GM12878 (cell line): ENCODE measurements at regions of chr5 and their contacts with region 1.

Region 1: GRCh38 chr5:72307968-72308852 is 11.8 kb downstream of the MRPS27 start:
- DNase-seq: peak; percentile 94
- ATAC-seq: peak; percentile 95
- H3K4me3 ChIP-seq: peak overlapping the region; percentile 79
- H3K27ac ChIP-seq: peak overlapping the region; percentile 97
- H3K4me1 ChIP-seq: peaks cover 22% of the 10 kb centered on the region
- H3K27me3 ChIP-seq: no peaks in the 10 kb centered on the region
- CTCF ChIP-seq: peak; percentile 83 to 97 (median 84)
- EP300 ChIP-seq: no peak
- POLR2A ChIP-seq: peak; percentile 100
- RAD21 ChIP-seq: peak; percentile 79

Region 2: GRCh38 chr5:71782771-71783770 is 525.1 kb before region 1 on chr5:
- CTCF ChIA-PET with region 1: interaction called, 35 read pairs
- POLR2A ChIA-PET with region 1: no interaction called
- RAD21 ChIA-PET with region 1: interaction called, 15 read pairs
- SMC1A ChIA-PET with region 1: interaction called, 15 read pairs
- in situ Hi-C with region 1: loop called (anchors 5 kb)
- intact Hi-C with region 1: loop called (anchors 1 kb)
- DNase-seq: peak; percentile 60
- ATAC-seq: peak; percentile 95
- H3K4me3 ChIP-seq: peak overlapping the region; percentile 1; the same call in 1 of the 2 replicates
- H3K27ac ChIP-seq: no peak overlapping the region; the same call in 1 of the 2 replicates
- H3K4me1 ChIP-seq: peaks cover 15% of the 10 kb centered on the region
- H3K27me3 ChIP-seq: no peaks in the 10 kb centered on the region; a peak in 1 of 4 replicates
- CTCF ChIP-seq: peak; percentile 61 to 71 (median 70)
- EP300 ChIP-seq: no peak; a peak in 1 of 4 replicates
- POLR2A ChIP-seq: no peak
- RAD21 ChIP-seq: peak; percentile 72

Region 3: DNA sequence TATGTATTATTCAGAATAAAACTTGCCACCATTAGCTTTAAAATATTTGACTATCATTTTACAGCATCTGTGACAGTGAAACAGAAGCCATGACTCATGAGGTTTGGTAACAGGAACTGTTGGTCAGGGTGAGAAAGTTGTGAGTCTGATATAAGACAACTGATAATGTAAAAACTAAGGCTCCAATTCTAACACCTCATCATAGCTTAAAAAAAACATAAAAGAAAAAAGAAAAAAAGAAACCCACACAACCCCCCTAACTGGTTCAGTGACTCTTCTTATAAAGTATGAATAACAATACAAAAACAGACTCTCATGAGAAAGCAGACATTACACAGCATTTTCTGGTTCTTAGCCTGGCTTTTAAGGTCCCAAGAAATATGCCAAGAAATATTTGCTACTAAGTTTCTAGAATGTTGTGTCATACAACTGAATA is 73.9 kb before region 1 on chr5:
- CTCF ChIA-PET with region 1: interaction called, 12 read pairs
- POLR2A ChIA-PET with region 1: interaction called, 3 read pairs
- RAD21 ChIA-PET with region 1: interaction called, 31 read pairs
- SMC1A ChIA-PET with region 1: interaction called, 8 read pairs
- in situ Hi-C with region 1: no loop called
- intact Hi-C with region 1: loop called (anchors 5 kb)
- DNase-seq: peak; percentile 52
- ATAC-seq: peak; percentile 96
- H3K4me3 ChIP-seq: no peak overlapping the region
- H3K27ac ChIP-seq: peak overlapping the region; percentile 32
- H3K4me1 ChIP-seq: peaks cover 32% of the 10 kb centered on the region
- H3K27me3 ChIP-seq: no peaks in the 10 kb centered on the region
- CTCF ChIP-seq: no peak
- EP300 ChIP-seq: peak; percentile 54 to 81; a peak in 2 of 4 replicates
- POLR2A ChIP-seq: no peak
- RAD21 ChIP-seq: no peak

Region 4: DNA sequence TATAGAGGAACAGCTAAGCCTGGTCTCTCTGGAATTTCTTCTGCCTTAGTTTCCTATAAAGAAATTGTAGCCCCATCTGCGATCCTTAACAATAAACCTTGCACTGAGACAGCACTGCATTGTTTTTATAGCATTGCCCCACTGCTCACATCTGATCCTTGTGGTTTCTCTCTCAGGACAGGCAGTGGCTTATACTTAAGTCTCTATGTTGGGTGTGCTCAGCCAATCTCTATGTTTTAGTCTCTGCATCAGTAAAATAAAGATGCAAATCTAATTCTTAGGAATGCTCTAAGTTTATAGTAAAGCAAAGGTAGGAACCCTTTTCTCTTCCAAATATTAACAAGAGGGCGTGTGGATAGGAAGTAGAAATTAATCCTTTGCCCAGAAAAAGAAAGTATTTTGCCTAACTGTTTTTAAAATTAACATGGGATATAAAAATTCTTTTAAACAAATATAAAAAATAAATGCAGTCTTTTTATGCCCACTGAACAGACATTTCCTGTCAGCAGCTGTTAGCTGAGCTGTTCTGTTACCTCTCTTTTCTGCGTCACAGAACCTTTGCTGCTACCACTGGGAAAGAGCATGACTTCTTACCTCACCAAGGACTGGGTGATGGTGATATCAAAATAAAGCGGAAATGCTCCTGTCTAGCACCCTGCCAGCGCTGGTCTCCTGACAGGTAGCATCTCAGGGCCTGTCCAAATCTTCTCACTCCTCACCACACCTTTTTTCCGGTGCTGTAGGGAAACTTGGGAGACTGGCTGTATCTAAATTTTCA is 17.7 kb before region 1 on chr5:
- CTCF ChIA-PET with region 1: interaction called, 20 read pairs
- POLR2A ChIA-PET with region 1: interaction called, 6 read pairs
- RAD21 ChIA-PET with region 1: interaction called, 29 read pairs
- SMC1A ChIA-PET with region 1: interaction called, 19 read pairs
- in situ Hi-C with region 1: no loop called
- intact Hi-C with region 1: no loop called
- DNase-seq: no peak
- ATAC-seq: no peak
- H3K4me3 ChIP-seq: no peak overlapping the region
- H3K27ac ChIP-seq: peak overlapping the region; percentile 50
- H3K4me1 ChIP-seq: peaks cover 23% of the 10 kb centered on the region
- H3K27me3 ChIP-seq: no peaks in the 10 kb centered on the region
- CTCF ChIP-seq: no peak
- EP300 ChIP-seq: no peak
- POLR2A ChIP-seq: no peak
- RAD21 ChIP-seq: no peak

Region 5: DNA sequence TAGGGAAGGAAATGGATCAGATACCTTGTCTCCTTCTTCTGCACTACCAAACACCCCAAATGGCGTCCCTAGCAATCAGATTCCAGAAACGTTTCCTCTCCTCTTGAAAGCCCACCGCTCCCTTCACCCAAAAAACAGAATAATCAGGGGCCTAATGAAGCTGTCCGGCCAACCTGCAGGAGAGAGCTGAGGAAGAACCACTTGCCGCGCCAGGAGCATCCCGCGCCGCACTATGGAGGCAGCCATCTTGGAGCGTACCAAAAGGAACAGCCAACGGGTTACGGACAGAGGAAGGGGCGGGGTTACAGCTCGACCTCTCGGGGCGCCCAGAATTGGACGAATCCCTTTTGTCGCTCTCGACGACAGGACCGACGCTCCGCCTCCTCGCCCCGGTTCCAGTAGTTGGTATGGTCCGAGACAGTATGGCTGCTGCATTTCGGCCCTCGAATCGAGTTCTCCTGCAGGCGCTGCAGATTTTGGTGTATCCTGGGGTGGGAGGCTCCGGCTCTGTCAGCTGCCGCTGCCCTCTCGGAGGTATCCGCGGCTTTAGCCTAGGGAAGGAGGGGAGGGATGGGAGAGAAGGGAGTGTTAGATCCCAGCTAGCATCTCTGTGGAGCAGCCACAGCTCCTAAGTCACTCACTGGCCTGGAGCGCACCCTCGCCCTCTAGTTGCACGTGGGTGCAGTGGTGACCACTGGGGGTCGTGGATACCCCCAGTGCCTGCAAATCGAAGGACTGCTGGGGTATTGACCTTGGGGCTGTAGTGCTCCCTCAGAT is 12.0 kb after region 1 on chr5 and contains the starts of genes MRPS27 and PTCD2:
- CTCF ChIA-PET with region 1: interaction called, 33 read pairs
- POLR2A ChIA-PET with region 1: interaction called, 21 read pairs
- RAD21 ChIA-PET with region 1: interaction called, 28 read pairs
- SMC1A ChIA-PET with region 1: interaction called, 33 read pairs
- in situ Hi-C with region 1: no loop called
- intact Hi-C with region 1: no loop called
- DNase-seq: peak; percentile 90
- ATAC-seq: peak; percentile 99
- H3K4me3 ChIP-seq: peak within 1 kb of the TSS; percentile 89
- H3K27ac ChIP-seq: peak within 1 kb of the TSS; percentile 84
- H3K4me1 ChIP-seq: no peaks in the 10 kb centered on the region; the same call in 1 of the 2 replicates
- H3K27me3 ChIP-seq: no peaks in the 10 kb centered on the region
- CTCF ChIP-seq: peak; percentile 14 to 34 (median 28); a peak in 5 of 6 replicates
- EP300 ChIP-seq: no peak
- POLR2A ChIP-seq: peak; percentile 89
- RAD21 ChIP-seq: no peak
- polyA plus RNA-seq, gene MRPS27: 61.0 to 88.9 TPM
- polyA plus RNA-seq, gene PTCD2: 9.1 to 11.0 TPM